IMR-90 (cell line): ENCODE measurements at regions of chrX and their contacts with region 1.

Region 1: DNA sequence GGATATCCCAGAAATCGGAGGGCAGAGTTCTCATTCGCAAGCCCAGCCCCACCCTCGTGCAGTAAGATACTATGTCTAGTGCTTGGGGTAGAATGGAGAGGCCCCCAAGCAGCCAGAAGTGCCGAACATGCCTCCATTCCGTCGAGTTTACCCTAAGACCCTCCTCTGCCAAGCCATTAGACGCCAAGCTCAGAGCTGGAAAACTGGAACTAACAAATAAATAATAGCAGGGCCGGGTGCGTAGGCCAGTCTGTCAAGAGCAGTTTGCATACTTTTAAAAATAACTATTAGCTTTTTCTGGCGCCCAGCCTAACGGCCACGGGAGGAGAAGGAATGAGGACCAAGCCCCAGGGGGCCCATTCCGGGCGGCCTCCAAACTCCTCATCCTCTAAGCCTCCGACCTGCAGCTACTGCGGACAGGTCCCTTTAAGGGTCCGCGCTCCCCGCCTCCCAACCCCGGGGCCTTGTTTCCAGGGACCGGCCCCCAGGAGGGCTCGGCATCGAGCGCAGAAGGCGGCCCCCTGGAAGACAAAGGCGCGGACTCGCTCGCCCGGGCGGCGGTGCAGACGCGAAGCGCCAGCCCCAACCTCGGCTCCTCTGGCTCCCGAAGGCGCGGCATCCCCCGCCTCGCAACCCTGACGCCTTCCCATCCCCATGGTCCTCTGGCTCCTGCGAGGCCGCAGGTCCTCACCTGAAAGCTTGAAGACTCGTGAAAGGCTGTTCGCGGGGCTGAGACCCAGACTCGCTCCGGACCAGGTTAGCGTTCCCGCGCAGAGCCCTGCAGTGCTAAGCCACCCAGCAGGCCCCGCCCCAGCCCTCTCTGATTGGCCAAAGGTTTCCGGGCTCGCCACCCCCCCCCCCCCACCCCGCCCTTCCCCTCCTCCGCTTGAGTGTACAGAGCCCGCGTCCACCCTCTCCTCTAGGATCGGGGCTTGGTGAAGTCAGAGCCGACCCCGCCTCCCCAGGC is at the start of gene TMSB15A:
- DNase-seq: peak; percentile 28
- ATAC-seq: peak; percentile 97
- H3K4me3 ChIP-seq: peak within 1 kb of the TSS; percentile 66
- H3K27ac ChIP-seq: no peak within 1 kb of the TSS
- H3K4me1 ChIP-seq: no peaks in the 10 kb centered on the region
- H3K27me3 ChIP-seq: no peaks in the 10 kb centered on the region; the same call in 1 of the 2 replicates
- CTCF ChIP-seq: no peak
- POLR2A ChIP-seq: no peak
- RAD21 ChIP-seq: no peak
- total RNA-seq, gene TMSB15A: 13.6 and 32.8 TPM in 2 replicates

Region 2: DNA sequence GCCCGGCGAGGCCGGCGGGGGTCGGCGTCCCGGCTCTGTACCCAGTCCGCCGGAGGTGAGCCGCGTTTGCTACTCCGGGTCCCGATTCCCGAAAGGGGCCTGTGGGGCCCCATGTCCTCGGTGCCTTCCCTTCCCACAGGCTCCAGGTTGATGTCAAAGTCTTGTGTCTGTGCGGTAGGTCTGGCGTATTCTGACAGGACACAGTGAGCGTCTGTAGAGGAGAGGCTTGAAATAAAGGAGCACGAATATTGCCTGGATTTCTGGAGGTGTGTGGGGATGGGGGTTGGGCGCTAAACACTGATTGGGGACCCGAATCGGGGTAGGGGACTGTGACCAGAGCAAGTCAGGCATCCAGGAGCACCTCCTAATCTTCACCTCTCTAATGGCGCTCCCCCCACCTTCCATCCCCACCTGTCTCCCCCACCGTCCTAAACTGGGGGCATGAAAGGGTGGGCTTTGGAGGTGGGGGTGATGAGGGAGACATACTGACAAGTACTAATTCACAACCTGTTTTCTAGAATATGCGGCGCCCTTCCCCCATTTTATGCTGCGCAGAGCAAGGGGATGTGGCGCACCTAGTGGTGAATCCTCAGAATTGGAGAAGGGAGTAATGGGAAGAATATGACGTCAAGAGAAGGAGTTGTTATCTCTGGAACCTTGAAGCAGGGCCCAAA is 196.8 kb after region 1 on chrX:
- CTCF ChIA-PET with region 1: no interaction called
- POLR2A ChIA-PET with region 1: no interaction called
- dilution Hi-C with region 1: no loop called
- in situ Hi-C with region 1: no loop called
- intact Hi-C with region 1: loop called (anchors 10 kb)
- DNase-seq: peak; percentile 41
- ATAC-seq: peak; percentile 74
- H3K4me3 ChIP-seq: peak overlapping the region; percentile 86
- H3K27ac ChIP-seq: peak overlapping the region; percentile 61
- H3K4me1 ChIP-seq: no peaks in the 10 kb centered on the region
- H3K27me3 ChIP-seq: no peaks in the 10 kb centered on the region; the same call in 1 of the 2 replicates
- CTCF ChIP-seq: peak; percentile 59
- POLR2A ChIP-seq: no peak
- RAD21 ChIP-seq: peak; percentile 45

Region 3: DNA sequence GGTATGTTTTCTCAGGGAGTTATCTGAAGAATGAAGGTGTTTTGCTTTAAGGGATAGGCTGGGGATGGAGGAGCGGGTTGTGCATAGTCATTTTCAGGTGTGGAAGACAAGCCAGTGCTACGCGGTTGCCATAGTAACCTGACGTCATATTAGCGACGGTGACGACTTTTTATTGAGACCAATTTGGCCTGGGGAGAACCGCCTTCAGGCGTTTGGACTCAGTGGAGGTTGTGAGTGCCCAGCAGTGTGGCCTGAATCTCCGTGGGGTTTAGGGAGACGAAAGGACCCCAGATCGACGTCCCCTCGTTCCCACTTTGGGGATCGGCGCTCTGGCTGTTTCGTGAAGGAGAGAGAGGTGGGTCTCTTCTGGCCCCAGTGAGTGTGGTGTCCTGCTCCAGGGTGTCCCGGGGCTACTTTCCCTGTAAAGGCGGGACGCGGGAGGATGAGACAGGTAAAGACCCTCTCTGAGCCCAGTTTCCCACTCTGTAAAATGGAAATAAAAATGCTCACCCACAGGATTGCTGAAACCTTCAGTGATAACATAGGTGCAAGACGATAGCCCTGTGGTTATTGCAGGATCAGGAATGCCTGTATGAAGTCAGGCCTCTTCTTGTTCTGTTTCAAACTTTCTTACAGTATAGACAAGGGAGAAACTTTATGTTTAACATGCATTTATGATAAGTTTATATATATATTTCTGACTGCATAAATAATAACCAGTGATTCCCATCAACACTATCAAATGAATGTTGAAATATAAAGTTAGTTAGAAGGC is 252.9 kb after region 1 on chrX:
- CTCF ChIA-PET with region 1: no interaction called
- POLR2A ChIA-PET with region 1: no interaction called
- dilution Hi-C with region 1: no loop called
- in situ Hi-C with region 1: no loop called
- intact Hi-C with region 1: no loop called
- DNase-seq: peak; percentile 88
- ATAC-seq: peak; percentile 80
- H3K4me3 ChIP-seq: peak overlapping the region; percentile 66
- H3K27ac ChIP-seq: peak overlapping the region; percentile 59
- H3K4me1 ChIP-seq: peaks cover 4% of the 10 kb centered on the region
- H3K27me3 ChIP-seq: no peaks in the 10 kb centered on the region
- CTCF ChIP-seq: no peak
- POLR2A ChIP-seq: peak; percentile 69; the same call in 1 of the 2 replicates
- RAD21 ChIP-seq: no peak